Adrenal gland (tissue), 19 donors: ENCODE measurements at regions of chr5 and their contacts with region 1.

Region 1: DNA sequence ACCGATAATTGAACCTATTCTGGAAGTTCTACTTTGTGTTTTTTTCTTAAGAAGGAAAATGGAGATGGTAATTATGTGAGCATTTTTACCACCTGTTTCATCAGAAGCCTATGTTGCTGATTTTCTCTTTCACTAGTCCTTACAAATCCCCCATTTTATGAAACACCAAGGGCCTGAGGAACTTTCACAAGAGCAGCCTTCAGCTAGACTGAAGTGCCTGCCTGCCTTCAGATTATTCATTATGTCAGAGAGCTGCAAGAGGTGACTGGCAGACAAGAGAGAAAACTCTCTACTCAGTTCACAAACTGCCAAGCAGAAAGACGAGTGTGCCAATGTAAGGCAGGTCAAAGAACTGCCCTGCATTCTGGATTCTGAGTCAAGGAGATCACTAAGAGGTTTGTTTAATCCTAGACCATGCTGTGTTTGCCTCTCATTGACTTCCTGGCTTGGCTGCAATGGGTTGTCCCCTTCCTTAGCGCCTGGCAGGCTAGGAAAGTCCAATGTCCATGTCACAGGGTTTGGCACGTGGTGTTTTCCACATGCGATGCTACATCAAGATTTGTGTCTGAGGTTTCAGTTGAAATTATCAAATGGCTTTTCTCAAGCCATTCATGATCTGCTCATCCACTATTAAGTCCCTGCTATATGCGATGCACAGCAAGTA is 143.3 kb downstream of the CDC42SE2 start:
- DNase-seq: no peak
- H3K4me3 ChIP-seq: no peak overlapping the region
- H3K27ac ChIP-seq: no peak overlapping the region
- H3K4me1 ChIP-seq: no peaks in the 10 kb centered on the region
- H3K27me3 ChIP-seq: no peaks in the 10 kb centered on the region
- CTCF ChIP-seq: no peak
- POLR2A ChIP-seq: no peak

Region 2: DNA sequence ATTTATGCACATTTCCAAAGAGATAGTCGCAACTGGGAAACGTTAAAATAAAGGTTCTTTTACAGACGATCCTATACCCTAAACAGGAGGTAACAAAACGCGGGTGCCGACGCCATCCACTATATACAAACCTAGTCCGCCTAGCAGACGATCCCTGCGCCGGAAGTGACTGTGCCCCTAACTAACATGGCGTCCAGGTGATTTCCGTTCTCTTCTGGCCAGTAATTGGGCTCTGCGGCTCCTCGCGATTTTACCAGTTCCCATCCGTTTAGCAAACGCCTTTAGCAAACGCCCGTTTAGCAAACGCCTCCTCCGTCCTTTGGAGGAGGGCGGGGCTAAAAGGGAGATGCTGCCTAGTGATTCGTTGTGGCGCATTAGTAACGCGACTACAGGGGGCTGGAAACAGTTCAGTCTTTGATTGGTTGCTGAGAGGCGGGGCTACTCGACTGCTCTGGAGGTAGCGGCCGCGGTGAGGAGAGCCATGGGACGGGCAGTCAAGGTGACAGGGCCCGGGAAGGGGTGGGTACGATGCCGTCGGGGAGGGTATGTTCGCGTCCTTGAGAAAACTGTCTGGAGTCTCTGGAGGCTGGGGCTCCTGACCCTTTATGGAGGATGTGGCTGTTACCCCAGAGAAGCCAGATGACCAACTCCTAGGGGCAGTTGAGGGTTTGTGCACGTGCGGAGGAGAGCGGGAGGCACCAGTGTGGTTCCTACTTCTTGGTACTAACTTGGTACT is 236.4 kb before region 1 on chr5 and contains the start of gene LYRM7:
- intact Hi-C with region 1: loop called in 1 of 2 experiments (anchors 10 kb)
- DNase-seq: peak; percentile 96 to 99 (median 99)
- H3K4me3 ChIP-seq: peak within 1 kb of the TSS; percentile 5 to 79 (median 58)
- H3K27ac ChIP-seq: peak within 1 kb of the TSS in 4 of 5 donors; percentile 53 to 90 (median 64)
- H3K4me1 ChIP-seq: peaks cover 7 to 18% of the 10 kb centered on the region in 2 donors
- H3K27me3 ChIP-seq: no peaks in the 10 kb centered on the region
- CTCF ChIP-seq: peak in 2 of 6 experiments; percentile 11 to 35
- POLR2A ChIP-seq: peak in 1 of 2 donors; percentile 79
- total RNA-seq, gene LYRM7: 3.0 to 14.5 (median 10.6) TPM

Region 3: GRCh38 chr5:131277875-131278740 is 129.0 kb before region 1 on chr5:
- intact Hi-C with region 1: loop called in 1 of 2 experiments (anchors 10 kb)
- DNase-seq: no peak
- H3K4me3 ChIP-seq: no peak overlapping the region
- H3K27ac ChIP-seq: peak overlapping the region in 1 of 5 donors; percentile 14
- H3K4me1 ChIP-seq: peaks cover 0 to 31% of the 10 kb centered on the region in 2 donors
- H3K27me3 ChIP-seq: no peaks in the 10 kb centered on the region
- CTCF ChIP-seq: no peak
- POLR2A ChIP-seq: no peak

Region 4: DNA sequence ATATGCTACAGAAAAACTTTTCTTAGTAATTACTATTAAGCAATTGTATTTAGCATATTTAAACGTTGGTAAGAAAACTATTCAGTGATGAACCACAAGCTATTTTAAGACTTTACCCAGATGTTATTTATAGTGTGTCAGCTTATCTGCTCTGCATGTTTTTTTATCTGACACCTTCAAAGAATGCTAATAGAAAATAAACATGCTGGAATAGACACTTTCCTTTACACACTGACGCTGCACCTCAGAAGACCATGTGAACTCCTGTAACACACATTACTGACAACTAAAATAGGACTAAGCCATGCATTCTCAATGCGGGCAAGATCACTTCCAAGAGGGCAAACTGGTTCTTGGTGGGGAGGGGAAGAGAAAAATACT is 351.4 kb after region 1 on chr5:
- intact Hi-C with region 1: no loop called
- DNase-seq: no peak
- H3K4me3 ChIP-seq: no peak overlapping the region
- H3K27ac ChIP-seq: no peak overlapping the region
- H3K4me1 ChIP-seq: peaks cover 22 to 38% of the 10 kb centered on the region in 2 donors
- H3K27me3 ChIP-seq: no peaks in the 10 kb centered on the region
- CTCF ChIP-seq: no peak
- POLR2A ChIP-seq: no peak